ENCODE measurements at regions of chr18 and their contacts with region 1.

Region 1: DNA sequence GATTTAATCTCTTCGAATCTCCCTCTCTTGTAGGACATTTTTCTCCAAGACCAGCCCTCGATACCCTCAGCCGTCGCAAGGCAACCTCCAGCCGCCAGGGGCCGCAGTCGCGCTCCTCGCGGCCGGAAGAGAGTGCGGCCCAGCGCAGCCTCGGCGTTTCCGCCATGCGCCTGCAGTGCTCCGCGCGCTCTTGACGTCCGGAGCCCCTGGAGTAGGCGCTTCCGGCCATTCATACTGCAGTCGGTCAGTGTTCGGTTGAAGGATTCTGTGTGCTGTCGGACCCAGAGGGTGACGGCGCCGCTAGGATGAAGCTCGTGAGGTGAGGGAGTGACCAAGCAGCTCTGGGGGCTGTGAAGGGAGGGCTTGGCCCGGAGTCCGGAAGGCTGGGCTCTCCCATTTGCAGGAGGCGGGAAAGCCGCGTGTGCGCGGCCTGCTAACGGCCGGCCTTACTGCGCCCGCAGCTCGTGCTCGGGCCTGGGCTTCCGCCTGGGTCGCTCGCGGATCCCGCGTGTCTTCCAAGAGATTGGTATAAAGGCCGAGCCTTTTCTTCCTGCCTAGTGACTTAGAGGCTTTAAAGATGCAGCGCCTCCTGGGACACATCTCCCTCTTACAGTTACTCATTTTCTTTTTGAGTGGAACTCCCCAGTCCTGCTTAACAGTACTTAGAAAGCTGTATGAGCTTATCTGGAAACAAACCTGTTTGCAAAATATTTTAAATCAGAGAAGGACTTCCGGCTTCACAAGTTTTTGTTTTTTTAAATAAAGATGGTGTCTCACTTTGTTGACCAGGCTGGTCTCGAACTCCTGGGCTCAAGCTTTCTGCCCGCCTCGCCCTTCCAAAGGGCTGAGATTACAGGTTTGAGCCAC is at the start of gene SNRPD1:
- DNase-seq: peak; percentile 91
- ATAC-seq: peak; percentile 97
- H3K4me3 Mint-ChIP-seq: peak within 1 kb of the TSS; percentile 100
- H3K27ac Mint-ChIP-seq: peak within 1 kb of the TSS; percentile 100
- H3K4me1 Mint-ChIP-seq: peaks cover 33% of the 10 kb centered on the region
- H3K27me3 Mint-ChIP-seq: peaks cover 2% of the 10 kb centered on the region
- total RNA-seq, gene SNRPD1: 102 to 114 TPM

Region 2: GRCh38 chr18:21433436-21433835 is 178.9 kb before region 1 on chr18:
- CTCF ChIA-PET with region 1: no interaction called
- POLR2A ChIA-PET with region 1: no interaction called
- DNase-seq: no peak
- ATAC-seq: no peak
- H3K4me3 Mint-ChIP-seq: no peak overlapping the region
- H3K27ac Mint-ChIP-seq: no peak overlapping the region
- H3K4me1 Mint-ChIP-seq: no peaks in the 10 kb centered on the region
- H3K27me3 Mint-ChIP-seq: peaks cover 9% of the 10 kb centered on the region

Region 3: DNA sequence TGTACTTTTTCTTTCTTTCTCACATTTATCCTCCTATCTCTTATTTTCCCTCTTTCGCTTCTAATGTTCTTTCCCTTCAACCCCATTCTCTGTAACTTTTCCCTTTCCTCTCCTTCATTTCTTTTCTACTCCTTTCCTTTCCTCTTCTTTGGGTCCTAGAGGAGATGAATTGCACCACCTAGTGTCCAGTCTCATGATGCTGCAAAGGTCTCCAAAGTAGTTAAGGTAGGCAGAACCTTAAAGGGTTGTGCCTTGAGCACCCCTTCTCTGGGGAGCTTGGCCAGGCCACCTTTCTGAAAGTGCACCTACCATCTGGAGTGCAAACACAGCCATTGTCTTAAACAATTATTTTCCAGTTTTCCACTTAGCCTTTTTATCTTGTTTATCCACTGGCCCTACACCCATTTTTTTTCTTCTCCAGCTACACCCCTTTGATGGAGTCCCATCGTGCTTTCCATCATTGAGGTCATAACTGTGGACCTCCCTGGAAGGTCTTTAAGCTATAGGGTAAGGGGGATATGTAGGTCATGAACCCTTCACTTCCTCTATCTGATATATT is 167.8 kb before region 1 on chr18:
- CTCF ChIA-PET with region 1: no interaction called
- POLR2A ChIA-PET with region 1: no interaction called
- DNase-seq: no peak
- ATAC-seq: no peak
- H3K4me3 Mint-ChIP-seq: no peak overlapping the region
- H3K27ac Mint-ChIP-seq: no peak overlapping the region
- H3K4me1 Mint-ChIP-seq: no peaks in the 10 kb centered on the region
- H3K27me3 Mint-ChIP-seq: peaks cover 18% of the 10 kb centered on the region

Region 4: GRCh38 chr18:21489119-21489750 is 123.1 kb before region 1 on chr18:
- CTCF ChIA-PET with region 1: no interaction called
- POLR2A ChIA-PET with region 1: no interaction called
- DNase-seq: peak; percentile 54
- ATAC-seq: peak; percentile 68
- H3K4me3 Mint-ChIP-seq: no peak overlapping the region
- H3K27ac Mint-ChIP-seq: no peak overlapping the region
- H3K4me1 Mint-ChIP-seq: no peaks in the 10 kb centered on the region
- H3K27me3 Mint-ChIP-seq: no peaks in the 10 kb centered on the region

Region 5: GRCh38 chr18:21629089-21629832 is 16.9 kb after region 1 on chr18:
- CTCF ChIA-PET with region 1: interaction called, 12 read pairs
- POLR2A ChIA-PET with region 1: interaction called, 9 read pairs
- DNase-seq: no peak
- ATAC-seq: no peak
- H3K4me3 Mint-ChIP-seq: peak overlapping the region; percentile 15
- H3K27ac Mint-ChIP-seq: peak overlapping the region; percentile 75
- H3K4me1 Mint-ChIP-seq: peaks cover 22% of the 10 kb centered on the region
- H3K27me3 Mint-ChIP-seq: no peaks in the 10 kb centered on the region

Region 6: DNA sequence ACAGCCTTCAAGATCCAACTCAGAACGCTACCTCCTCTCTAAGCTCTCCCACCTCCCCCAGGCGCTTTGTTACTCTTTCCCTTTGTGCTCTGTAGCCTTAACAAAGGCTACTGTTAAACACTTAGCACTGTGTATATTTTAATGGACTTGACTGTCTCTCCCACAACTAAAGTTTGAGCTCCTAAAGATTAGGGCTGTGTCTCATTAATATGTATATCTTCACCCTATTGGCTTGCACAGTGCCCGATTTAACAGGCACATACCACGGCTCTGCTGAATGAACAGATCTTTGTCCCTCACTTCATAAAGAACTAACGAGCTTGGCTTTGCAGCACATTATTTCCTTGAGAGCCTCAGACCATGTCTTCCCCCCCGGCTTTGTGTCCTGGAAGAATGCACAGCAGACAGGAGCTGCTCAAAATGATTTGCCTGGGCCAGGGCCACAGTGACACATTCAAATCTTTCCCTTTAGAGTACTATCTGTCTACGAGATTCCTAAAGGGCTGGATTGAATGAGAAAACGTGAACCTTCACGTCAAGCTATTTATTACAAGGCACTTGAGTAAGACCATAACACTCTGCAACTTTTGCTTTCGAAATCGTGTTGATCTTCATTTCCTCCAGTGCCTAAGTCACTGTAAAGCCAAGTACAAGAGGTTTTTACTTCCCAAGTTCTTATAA is 70.2 kb after region 1 on chr18:
- CTCF ChIA-PET with region 1: interaction called, 7 read pairs
- POLR2A ChIA-PET with region 1: interaction called, 11 read pairs
- DNase-seq: peak; percentile 45
- ATAC-seq: peak; percentile 93
- H3K4me3 Mint-ChIP-seq: no peak overlapping the region
- H3K27ac Mint-ChIP-seq: no peak overlapping the region
- H3K4me1 Mint-ChIP-seq: peaks cover 3% of the 10 kb centered on the region
- H3K27me3 Mint-ChIP-seq: no peaks in the 10 kb centered on the region

Region 7: GRCh38 chr18:21733011-21733410 is 120.7 kb after region 1 on chr18:
- CTCF ChIA-PET with region 1: no interaction called
- POLR2A ChIA-PET with region 1: no interaction called
- DNase-seq: no peak
- ATAC-seq: no peak
- H3K4me3 Mint-ChIP-seq: no peak overlapping the region
- H3K27ac Mint-ChIP-seq: no peak overlapping the region
- H3K4me1 Mint-ChIP-seq: no peaks in the 10 kb centered on the region
- H3K27me3 Mint-ChIP-seq: peaks cover 11% of the 10 kb centered on the region

Measured in activated CD8-positive, alpha-beta T cell treated with anti-CD3 and anti-CD28 coated beads, Interleukin-2, amount 10 ng/mL, durations not matched to agents 7 days and 5 days (primary cell).